IMR-90 (cell line): ENCODE measurements at regions of chr9 and their contacts with region 1.

Region 1: GRCh38 chr9:72292256-72292682 is 72.7 kb downstream of the ZFAND5 start:
- DNase-seq: peak; percentile 49
- ATAC-seq: peak; percentile 78
- H3K4me3 ChIP-seq: no peak overlapping the region
- H3K27ac ChIP-seq: no peak overlapping the region
- H3K4me1 ChIP-seq: peaks cover 2% of the 10 kb centered on the region; the same call in 1 of the 2 replicates
- H3K27me3 ChIP-seq: 0 out of 2 replicates have a peak, but pooled peaks cover 4% of the 10 kb centered on the region
- CTCF ChIP-seq: peak; percentile 68
- POLR2A ChIP-seq: no peak
- RAD21 ChIP-seq: peak; percentile 65

Region 2: GRCh38 chr9:72753266-72753893 is 461.1 kb after region 1 on chr9:
- CTCF ChIA-PET with region 1: interaction called, 6 read pairs
- POLR2A ChIA-PET with region 1: interaction called, 8 read pairs
- dilution Hi-C with region 1: no loop called
- in situ Hi-C with region 1: no loop called
- intact Hi-C with region 1: loop called (anchors 1 kb)
- DNase-seq: peak; percentile 31
- ATAC-seq: peak; percentile 60; the same call in 1 of the 2 replicates
- H3K4me3 ChIP-seq: no peak overlapping the region
- H3K27ac ChIP-seq: no peak overlapping the region
- H3K4me1 ChIP-seq: no peaks in the 10 kb centered on the region
- H3K27me3 ChIP-seq: peaks cover 4% of the 10 kb centered on the region
- CTCF ChIP-seq: peak; percentile 64
- POLR2A ChIP-seq: no peak
- RAD21 ChIP-seq: peak; percentile 73

Region 3: DNA sequence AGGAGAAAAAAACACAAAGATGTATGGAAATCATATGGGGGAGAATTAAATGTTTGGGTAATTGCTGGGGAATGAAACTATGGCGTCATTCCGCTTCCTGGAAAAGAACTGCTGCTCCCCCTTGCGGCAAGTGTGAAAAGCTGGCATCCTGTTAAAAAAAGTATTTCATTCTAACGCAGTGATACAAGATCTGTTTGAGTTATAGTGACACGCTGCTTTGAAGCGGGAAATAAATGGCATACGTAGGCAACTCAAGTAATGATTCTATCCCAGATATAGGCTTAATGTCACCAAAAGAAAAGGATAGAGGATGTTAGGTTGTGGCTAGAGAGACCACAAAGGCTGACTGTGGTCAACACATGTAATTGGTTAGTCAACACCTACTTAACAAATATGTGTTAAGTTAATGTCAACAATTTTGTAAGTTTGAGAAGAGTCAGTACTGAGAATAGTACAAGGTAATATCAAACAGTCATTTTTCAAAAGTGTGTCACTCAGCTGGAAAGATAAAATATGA is 730.8 kb after region 1 on chr9:
- CTCF ChIA-PET with region 1: interaction called, 5 read pairs
- POLR2A ChIA-PET with region 1: no interaction called
- dilution Hi-C with region 1: no loop called
- in situ Hi-C with region 1: no loop called
- intact Hi-C with region 1: loop called (anchors 2 kb)
- DNase-seq: peak; percentile 63
- ATAC-seq: peak; percentile 74
- H3K4me3 ChIP-seq: no peak overlapping the region
- H3K27ac ChIP-seq: no peak overlapping the region
- H3K4me1 ChIP-seq: no peaks in the 10 kb centered on the region
- H3K27me3 ChIP-seq: no peaks in the 10 kb centered on the region
- CTCF ChIP-seq: peak; percentile 82
- POLR2A ChIP-seq: no peak
- RAD21 ChIP-seq: peak; percentile 65